Motor neuron (in vitro differentiated cells): ENCODE measurements at regions of chr3 and their contacts with region 1.

Region 1: DNA sequence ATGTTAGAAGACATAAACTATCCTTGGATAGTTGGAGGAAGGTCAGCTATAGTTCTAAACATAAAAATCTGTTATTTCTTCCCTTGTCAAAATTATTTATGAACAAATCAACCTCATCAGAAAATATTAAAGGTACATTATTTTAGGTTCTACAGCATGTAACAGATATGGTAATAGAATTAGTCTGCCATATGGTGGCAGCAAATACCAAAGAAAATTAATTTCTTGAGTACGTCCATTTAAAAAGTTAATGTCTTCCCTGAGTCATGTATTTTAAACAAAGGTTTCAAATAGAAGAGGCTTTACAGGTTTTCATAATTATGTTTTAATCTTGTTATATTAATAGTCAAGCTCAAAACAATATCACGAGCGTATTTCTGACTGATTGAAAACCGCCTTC is 17.9 kb upstream of the ANKRD28 start:
- ATAC-seq: peak in 3 of 8 experiments; percentile 56 to 77 (median 75)
- H3K4me3 ChIP-seq: no peak overlapping the region
- H3K27ac ChIP-seq: no peak overlapping the region
- H3K4me1 ChIP-seq: no peaks in the 10 kb centered on the region

Region 2: GRCh38 chr3:15629860-15630597 is 185.7 kb before region 1 on chr3:
- in situ Hi-C with region 1: loop called in 2 of 9 experiments (anchors 10 to 25 kb)
- ATAC-seq: peak; percentile 65 to 97 (median 88)
- H3K4me3 ChIP-seq: no peak overlapping the region
- H3K27ac ChIP-seq: no peak overlapping the region
- H3K4me1 ChIP-seq: peaks cover 4 to 33% of the 10 kb centered on the region in 2 donors

Region 3: GRCh38 chr3:16247276-16248061 is 431.8 kb after region 1 on chr3:
- in situ Hi-C with region 1: loop called in 2 of 9 experiments (anchors 25 kb)
- ATAC-seq: peak; percentile 66 to 94 (median 88)
- H3K4me3 ChIP-seq: no peak overlapping the region
- H3K27ac ChIP-seq: no peak overlapping the region
- H3K4me1 ChIP-seq: peaks cover 0 to 3% of the 10 kb centered on the region in 2 donors